RWPE1 (cell line): ENCODE measurements at regions of chr5 and their contacts with region 1.

Region 1: GRCh38 chr5:122091936-122092600 is 14.0 kb upstream of the LOX start:
- DNase-seq: peak; percentile 42
- H3K27ac ChIP-seq: no peak overlapping the region
- CTCF ChIP-seq: peak; percentile 56

Region 2: GRCh38 chr5:121913418-121913817 is 178.7 kb before region 1 on chr5:
- CTCF ChIA-PET with region 1: no interaction called
- POLR2A ChIA-PET with region 1: no interaction called
- DNase-seq: no peak
- H3K27ac ChIP-seq: no peak overlapping the region
- CTCF ChIP-seq: no peak

Region 3: GRCh38 chr5:122076664-122077365 is 15.3 kb before region 1 on chr5:
- CTCF ChIA-PET with region 1: interaction called, 21 read pairs
- POLR2A ChIA-PET with region 1: no interaction called
- DNase-seq: peak; percentile 48
- H3K27ac ChIP-seq: peak overlapping the region; percentile 98
- CTCF ChIP-seq: peak; percentile 96

Region 4: GRCh38 chr5:122120957-122121356 is 28.9 kb after region 1 on chr5:
- CTCF ChIA-PET with region 1: no interaction called
- POLR2A ChIA-PET with region 1: no interaction called
- DNase-seq: peak; percentile 23
- H3K27ac ChIP-seq: no peak overlapping the region
- CTCF ChIP-seq: no peak